Activated CD8-positive, alpha-beta memory T cell treated with anti-CD3 and anti-CD28 coated beads, Interleukin-2, amount 10 ng/mL, durations not matched to agents 7 days and 5 days (primary cell): ENCODE measurements at regions of chr15 and their contacts with region 1.

Region 1: DNA sequence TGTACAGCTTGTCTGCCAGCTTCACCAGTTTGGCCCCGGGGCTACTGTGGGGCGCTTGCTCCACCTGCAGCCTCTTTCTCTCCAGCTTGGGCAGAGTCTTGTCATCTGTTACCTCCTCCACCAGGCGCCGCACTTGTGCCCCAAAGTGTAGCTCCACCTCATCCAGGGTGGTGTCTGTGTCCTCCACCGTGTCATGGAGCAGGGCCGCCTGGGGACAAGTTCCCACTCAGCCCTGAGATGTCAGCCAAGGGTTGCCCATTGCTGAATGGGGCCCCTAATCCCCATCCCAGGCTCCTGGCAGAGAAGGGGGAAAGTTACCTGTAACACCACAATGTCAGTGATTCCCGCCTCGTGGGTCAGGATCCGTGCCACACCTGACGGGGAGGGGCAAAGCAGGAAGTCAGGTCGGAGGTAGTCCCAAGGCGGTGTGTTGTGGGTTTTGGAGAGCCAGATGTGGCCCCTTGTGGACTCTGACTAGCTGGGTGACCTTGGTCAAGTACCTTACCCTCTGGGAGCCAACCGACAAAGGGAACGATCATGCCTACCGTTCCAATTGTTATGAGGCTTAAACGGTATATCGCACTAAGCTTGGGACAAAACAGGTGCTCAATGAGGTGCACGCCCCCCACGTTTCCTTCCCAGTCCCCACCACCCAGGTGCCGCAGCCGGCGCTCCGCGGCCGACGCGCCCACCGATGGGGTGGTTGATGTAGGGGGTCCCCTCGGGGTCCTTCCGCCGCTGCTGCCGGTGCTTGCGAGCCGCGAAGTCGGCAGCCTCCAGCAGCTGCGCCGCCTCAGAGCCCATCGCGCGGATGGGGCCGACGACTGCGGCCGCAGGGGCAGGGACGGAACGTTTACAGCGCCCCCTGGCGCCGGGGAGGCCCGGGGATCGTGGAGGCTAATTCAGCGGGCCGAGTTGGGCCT is at the start of gene HDDC3:
- DNase-seq: peak; percentile 95
- ATAC-seq: peak; percentile 52
- H3K4me3 Mint-ChIP-seq: peak within 1 kb of the TSS; percentile 99
- H3K27ac Mint-ChIP-seq: peak within 1 kb of the TSS; percentile 100
- H3K4me1 Mint-ChIP-seq: peaks cover 61% of the 10 kb centered on the region
- H3K27me3 Mint-ChIP-seq: no peaks in the 10 kb centered on the region
- total RNA-seq, gene HDDC3: 33.2 to 39.3 TPM

Region 2: GRCh38 chr15:90291679-90292356 is 640.2 kb before region 1 on chr15:
- CTCF ChIA-PET with region 1: interaction called, 11 read pairs
- DNase-seq: peak; percentile 55
- ATAC-seq: no peak
- H3K4me3 Mint-ChIP-seq: no peak overlapping the region
- H3K27ac Mint-ChIP-seq: no peak overlapping the region
- H3K4me1 Mint-ChIP-seq: peaks cover 18% of the 10 kb centered on the region
- H3K27me3 Mint-ChIP-seq: peaks cover 10% of the 10 kb centered on the region

Region 3: DNA sequence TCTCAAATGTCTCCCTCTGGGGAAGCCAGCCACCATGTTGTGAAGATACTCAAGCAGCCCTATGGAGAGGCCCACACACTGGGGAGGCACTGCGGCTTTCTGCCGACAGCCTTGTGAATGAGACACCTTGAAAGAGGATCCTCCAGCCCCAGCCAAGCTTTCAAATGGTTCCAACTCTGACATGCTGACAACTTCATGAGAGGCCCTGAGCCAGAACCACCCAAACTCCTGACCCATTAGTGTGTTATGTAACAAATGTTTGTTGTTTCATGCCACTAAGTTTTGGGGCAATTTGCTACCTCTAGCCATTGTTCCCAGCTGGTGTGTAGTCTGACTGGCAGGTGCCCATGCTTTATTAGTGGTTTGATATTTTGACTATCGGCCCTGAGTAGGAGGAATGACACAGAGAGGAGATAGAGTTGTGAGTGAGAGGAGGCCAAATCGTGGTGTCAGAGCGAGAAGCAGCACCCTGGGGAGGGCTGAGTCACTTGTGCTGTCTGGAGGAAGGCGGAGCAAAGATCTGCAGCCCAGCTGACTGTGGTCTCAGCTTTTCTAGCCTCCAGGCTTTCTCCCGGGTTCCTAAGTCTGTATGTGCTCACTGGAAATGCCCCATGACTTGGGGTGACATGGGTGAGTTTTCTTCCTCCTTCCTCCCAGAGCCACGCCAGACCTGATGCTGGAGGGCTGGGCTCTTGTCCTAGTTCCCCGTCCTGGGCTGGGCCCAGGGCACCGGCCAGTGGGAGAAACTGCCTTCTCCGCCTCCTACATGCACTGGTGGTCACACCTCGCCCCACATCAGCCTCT is 271.6 kb before region 1 on chr15:
- CTCF ChIA-PET with region 1: no interaction called
- DNase-seq: peak; percentile 91
- ATAC-seq: peak; percentile 82
- H3K4me3 Mint-ChIP-seq: peak overlapping the region; percentile 72
- H3K27ac Mint-ChIP-seq: peak overlapping the region; percentile 88
- H3K4me1 Mint-ChIP-seq: peaks cover 86% of the 10 kb centered on the region
- H3K27me3 Mint-ChIP-seq: peaks cover 9% of the 10 kb centered on the region

Region 4: DNA sequence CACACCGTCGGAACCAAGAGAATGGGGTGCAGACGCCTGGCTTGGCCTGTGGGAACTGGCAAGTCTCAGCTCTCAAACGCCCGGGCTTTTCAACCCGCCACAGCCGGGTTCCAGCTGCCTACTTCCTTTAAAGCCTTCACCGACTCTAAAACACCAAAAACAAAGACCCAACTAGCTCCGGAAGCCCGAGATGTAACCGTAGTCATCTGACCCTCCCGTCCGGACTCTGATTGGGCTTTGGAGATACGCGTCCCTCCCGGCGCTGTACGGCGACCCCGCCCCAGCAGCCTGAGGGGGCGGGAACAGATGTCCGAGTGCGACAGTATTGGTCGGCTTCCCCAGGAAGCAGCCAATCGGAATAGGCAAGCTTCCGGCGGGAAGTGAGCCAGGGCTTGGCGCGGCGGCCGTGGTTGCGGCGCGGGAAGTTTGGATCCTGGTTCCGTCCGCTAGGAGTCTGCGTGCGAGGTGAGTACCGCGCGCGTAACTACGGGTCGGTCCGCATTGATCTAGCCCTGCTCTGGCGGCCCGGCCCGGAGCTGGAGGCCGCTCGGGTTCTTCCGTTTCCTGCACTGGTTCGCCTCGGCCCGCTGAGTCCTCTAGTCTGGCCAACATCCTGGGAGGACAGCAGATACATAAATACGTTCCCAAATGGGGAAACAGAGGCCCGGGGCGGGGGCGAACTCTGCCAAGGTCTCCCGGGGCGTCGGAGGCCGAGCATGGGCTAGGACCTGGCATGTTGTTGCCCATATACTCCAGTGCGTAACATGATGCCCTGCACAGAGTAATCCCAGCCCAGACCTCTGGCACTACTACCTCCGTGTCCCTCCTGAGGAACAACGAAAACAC is 214.8 kb before region 1 on chr15 and contains the start of gene BLM:
- CTCF ChIA-PET with region 1: interaction called, 27 read pairs
- DNase-seq: peak; percentile 98
- ATAC-seq: peak; percentile 99
- H3K4me3 Mint-ChIP-seq: peak within 1 kb of the TSS; percentile 80
- H3K27ac Mint-ChIP-seq: peak within 1 kb of the TSS; percentile 95
- H3K4me1 Mint-ChIP-seq: peaks cover 27% of the 10 kb centered on the region
- H3K27me3 Mint-ChIP-seq: no peaks in the 10 kb centered on the region
- total RNA-seq, gene BLM: 83.4 to 92.7 TPM

Region 5: DNA sequence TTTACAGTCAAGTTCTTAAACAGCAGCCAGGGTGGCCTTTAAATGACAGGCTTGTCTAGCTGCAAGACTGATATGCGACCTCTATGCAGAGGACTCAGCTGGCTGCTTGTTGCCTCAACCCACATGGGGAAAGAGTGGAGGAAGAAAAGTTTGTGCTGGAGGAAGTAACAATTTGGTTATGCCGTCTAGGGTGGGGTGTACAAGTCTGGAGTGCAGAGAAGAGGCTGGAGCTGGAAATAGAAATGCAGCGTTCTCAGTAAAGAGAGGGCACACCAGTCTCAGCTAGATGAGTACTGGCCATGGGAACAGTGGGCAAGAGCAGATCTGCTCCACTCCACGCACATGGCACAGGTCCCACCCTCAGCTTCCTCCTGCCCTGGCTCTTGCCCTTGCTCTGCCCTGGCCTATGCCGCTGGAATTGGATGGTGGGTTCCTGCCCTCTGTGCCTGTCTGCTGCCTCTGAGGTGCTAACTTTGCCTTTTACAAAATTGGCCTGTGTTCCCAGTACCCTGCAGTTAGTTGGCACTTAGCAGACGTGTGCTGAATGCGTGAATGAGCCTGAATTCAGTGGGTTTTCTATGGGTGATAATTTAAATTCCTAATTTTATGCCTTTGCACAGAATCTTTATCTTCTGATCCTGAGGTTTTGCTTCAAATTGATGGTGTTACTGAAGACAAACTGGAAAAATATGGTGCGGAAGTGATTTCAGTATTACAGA is 123.3 kb before region 1 on chr15:
- CTCF ChIA-PET with region 1: interaction called, 13 read pairs
- DNase-seq: peak; percentile 38
- ATAC-seq: no peak
- H3K4me3 Mint-ChIP-seq: peak overlapping the region; percentile 38
- H3K27ac Mint-ChIP-seq: peak overlapping the region; percentile 88
- H3K4me1 Mint-ChIP-seq: peaks cover 71% of the 10 kb centered on the region
- H3K27me3 Mint-ChIP-seq: no peaks in the 10 kb centered on the region

Region 6: DNA sequence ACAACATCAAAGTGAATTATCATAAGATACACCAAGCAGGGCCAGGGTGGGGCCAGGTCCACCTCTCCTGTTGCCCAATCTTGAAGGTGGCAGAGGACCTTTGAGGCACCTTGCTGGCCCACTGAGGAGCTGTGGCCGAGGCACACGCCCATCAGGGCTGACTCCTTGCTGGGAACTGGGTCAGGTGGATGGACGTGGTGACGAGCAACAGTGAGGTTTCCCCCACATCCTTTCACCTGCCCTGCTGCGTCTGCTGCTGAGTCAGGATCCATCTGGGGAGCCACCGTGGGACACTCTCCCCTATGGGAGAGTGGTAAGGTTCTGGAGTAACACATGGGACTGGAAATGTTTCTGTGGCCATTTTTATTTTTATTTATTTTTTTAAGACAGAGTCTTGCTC is 80.9 kb before region 1 on chr15:
- CTCF ChIA-PET with region 1: interaction called, 26 read pairs
- DNase-seq: peak; percentile 85
- ATAC-seq: peak; percentile 37
- H3K4me3 Mint-ChIP-seq: peak overlapping the region; percentile 60
- H3K27ac Mint-ChIP-seq: peak overlapping the region; percentile 98
- H3K4me1 Mint-ChIP-seq: peaks cover 80% of the 10 kb centered on the region
- H3K27me3 Mint-ChIP-seq: no peaks in the 10 kb centered on the region

Region 7: GRCh38 chr15:90895336-90896117 is 36.5 kb before region 1 on chr15:
- CTCF ChIA-PET with region 1: interaction called, 181 read pairs
- DNase-seq: no peak
- ATAC-seq: no peak
- H3K4me3 Mint-ChIP-seq: no peak overlapping the region
- H3K27ac Mint-ChIP-seq: no peak overlapping the region
- H3K4me1 Mint-ChIP-seq: peaks cover 7% of the 10 kb centered on the region
- H3K27me3 Mint-ChIP-seq: no peaks in the 10 kb centered on the region

Region 8: DNA sequence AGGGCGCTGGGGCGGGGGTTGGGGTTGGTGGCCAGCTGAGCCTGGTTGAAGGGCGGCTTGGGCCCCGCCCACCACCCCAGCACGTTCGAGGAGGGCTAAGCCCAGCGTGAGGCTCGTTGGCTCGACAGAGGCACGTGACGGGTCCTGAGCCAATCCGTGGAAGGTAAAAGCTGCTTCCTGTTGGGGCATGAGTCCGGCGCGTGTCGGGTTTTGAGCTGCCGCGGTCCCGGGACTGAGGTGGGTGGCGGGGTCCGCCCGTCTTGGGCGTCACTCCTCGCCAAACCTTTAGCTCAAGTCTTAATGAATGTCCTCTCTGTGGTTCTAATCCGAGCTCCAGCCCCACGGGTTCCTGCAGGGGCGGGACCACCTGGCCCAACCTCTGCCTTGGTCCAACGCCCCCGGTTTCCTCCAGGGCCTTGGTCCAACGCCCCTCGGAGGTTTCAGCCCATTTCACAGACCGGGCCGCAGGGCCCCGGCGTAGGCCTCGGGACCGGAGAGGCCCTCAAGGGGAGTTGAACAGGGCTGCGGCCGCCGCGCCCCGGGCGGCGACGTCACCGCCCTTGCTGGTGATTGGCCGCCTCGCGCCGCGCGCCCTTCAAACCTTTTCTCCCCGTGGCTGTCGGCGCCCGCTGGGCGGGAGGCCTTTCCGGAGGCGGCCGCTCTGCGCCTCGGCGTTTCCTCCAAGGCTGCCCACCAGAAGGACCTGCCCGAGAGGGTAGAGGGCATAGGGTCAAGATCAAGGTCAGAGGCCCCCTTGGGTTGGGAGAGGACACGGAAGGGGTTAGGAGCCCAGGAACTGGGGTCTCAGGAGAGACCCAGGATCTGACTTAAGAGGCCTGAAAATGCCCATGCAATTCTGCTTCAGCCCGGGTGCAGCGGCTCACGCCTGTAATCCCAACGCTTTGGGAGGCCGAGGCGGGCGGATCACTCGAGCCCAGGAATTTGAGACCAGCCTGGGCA is 23.0 kb after region 1 on chr15 and contains the start of gene RCCD1:
- CTCF ChIA-PET with region 1: interaction called, 101 read pairs
- DNase-seq: peak; percentile 97
- ATAC-seq: peak; percentile 94
- H3K4me3 Mint-ChIP-seq: peak within 1 kb of the TSS; percentile 86
- H3K27ac Mint-ChIP-seq: peak within 1 kb of the TSS; percentile 95
- H3K4me1 Mint-ChIP-seq: peaks cover 21% of the 10 kb centered on the region
- H3K27me3 Mint-ChIP-seq: no peaks in the 10 kb centered on the region
- total RNA-seq, gene RCCD1: 35.4 to 50.1 TPM